HepG2 (cell line): ENCODE measurements at regions of chr15 and their contacts with region 1.

Region 1: DNA sequence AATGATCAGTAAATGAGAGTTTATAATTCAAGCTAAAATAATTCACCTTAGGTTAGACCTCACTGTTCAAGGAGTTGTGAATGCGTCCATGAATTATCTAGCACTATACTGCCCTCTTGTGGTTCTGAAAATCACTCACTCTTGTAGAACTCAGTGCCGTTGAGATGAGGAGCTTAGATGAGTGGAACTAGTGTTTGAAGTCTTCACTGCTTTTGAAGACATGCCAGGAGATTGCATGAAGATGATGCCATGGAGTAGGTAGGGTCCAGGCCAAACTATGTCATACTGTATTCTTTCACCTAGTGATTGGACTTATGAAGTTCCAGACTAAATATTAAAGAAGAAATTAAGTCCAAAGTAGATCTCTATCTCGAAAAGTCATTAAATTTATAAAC is 28.8 kb downstream of the LYSMD4 start:
- DNase-seq: peak; percentile 81
- ATAC-seq: peak; percentile 89
- H3K4me3 ChIP-seq: no peak overlapping the region
- H3K27ac ChIP-seq: no peak overlapping the region
- H3K4me1 ChIP-seq: peaks cover 15% of the 10 kb centered on the region
- H3K27me3 ChIP-seq: no peaks in the 10 kb centered on the region
- CTCF ChIP-seq: peak; percentile 86
- EP300 ChIP-seq: no peak
- POLR2A ChIP-seq: no peak
- RAD21 ChIP-seq: peak; percentile 64; the same call in 1 of the 2 replicates

Region 2: DNA sequence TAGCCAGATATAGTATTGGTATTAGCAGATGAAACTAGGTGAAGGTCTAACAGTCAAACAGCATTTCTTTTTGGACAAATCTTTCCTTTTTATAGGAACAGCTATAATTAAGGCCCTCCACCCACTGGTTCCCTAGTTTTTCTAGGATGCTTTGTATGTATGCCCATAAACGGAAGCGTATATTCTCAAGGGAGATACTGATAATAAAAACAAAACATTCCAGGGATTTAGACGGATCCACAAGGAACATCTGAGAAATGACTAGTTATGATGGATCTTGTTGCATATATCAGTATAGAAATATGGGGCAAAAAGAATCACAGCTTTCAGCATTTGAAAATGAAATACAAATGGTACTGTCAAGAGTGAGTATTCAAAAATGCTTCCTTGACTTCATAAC is 430.6 kb before region 1 on chr15:
- CTCF ChIA-PET with region 1: interaction called, 16 read pairs
- POLR2A ChIA-PET with region 1: no interaction called
- in situ Hi-C with region 1: no loop called
- intact Hi-C with region 1: loop called (anchors 1 kb)
- DNase-seq: no peak
- ATAC-seq: no peak
- H3K4me3 ChIP-seq: no peak overlapping the region
- H3K27ac ChIP-seq: no peak overlapping the region
- H3K4me1 ChIP-seq: peaks cover under 1% of the 10 kb centered on the region; the same call in 1 of the 2 replicates
- H3K27me3 ChIP-seq: no peaks in the 10 kb centered on the region
- CTCF ChIP-seq: no peak
- EP300 ChIP-seq: no peak
- POLR2A ChIP-seq: no peak
- RAD21 ChIP-seq: no peak

Region 3: DNA sequence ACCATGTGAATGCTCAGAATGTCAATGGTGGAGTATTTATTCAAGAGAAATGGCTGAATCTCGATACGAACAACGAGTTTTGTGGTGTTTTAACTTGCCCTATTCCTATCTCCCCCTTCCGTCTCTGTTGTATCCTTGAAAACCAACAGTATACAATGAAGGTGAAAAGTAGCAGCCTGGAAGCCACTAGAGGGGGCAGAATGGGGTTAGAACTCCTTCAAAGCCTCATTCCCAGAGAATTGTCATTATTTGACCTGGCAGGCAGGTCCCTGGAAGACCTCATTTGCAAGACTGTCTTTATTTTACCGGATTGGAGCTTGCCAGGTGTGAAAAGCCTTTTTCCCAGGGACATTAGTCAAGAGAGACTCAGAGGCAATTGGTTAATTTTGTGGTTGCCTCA is 313.8 kb before region 1 on chr15:
- CTCF ChIA-PET with region 1: no interaction called
- POLR2A ChIA-PET with region 1: no interaction called
- in situ Hi-C with region 1: no loop called
- intact Hi-C with region 1: loop called (anchors 5 kb)
- DNase-seq: peak; percentile 27
- ATAC-seq: peak; percentile 72
- H3K4me3 ChIP-seq: no peak overlapping the region
- H3K27ac ChIP-seq: no peak overlapping the region
- H3K4me1 ChIP-seq: peaks cover 15% of the 10 kb centered on the region
- H3K27me3 ChIP-seq: no peaks in the 10 kb centered on the region
- CTCF ChIP-seq: peak; percentile 45
- EP300 ChIP-seq: no peak
- POLR2A ChIP-seq: no peak
- RAD21 ChIP-seq: no peak

Region 4: DNA sequence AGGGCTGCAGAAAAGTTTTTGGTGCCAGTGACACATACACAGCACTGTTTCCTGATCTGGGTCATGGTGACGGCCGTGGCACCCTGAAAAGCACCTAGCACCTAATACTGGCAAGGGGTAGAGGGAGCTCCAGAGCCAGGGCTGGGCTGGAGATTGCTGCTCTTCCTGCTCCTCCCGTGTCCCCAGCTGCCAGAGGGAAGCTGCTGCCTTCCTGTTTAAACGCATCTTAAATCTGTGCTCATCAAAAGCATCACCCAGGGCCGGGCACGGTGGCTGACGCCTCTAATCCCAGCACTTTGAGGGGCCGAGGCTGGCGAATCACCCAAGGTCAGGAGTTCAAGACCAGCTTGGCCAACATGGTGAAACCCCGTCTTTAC is 295.4 kb before region 1 on chr15:
- CTCF ChIA-PET with region 1: interaction called, 3 read pairs
- POLR2A ChIA-PET with region 1: interaction called, 3 read pairs
- in situ Hi-C with region 1: loop called (anchors 25 kb)
- intact Hi-C with region 1: loop called (anchors 1 kb)
- DNase-seq: peak; percentile 66
- ATAC-seq: peak; percentile 94
- H3K4me3 ChIP-seq: peak overlapping the region in 1 of 3 experiments; percentile 40; a peak in 1 of 6 replicates
- H3K27ac ChIP-seq: no peak overlapping the region
- H3K4me1 ChIP-seq: peaks cover 40% of the 10 kb centered on the region
- H3K27me3 ChIP-seq: no peaks in the 10 kb centered on the region; a peak in 1 of 5 replicates
- CTCF ChIP-seq: peak; percentile 91
- EP300 ChIP-seq: no peak
- POLR2A ChIP-seq: no peak
- RAD21 ChIP-seq: peak; percentile 85

Region 5: GRCh38 chr15:99454941-99455788 is 249.3 kb before region 1 on chr15:
- CTCF ChIA-PET with region 1: no interaction called
- POLR2A ChIA-PET with region 1: no interaction called
- in situ Hi-C with region 1: no loop called
- intact Hi-C with region 1: loop called (anchors 5 kb)
- DNase-seq: peak; percentile 49
- ATAC-seq: peak; percentile 87
- H3K4me3 ChIP-seq: peak overlapping the region; percentile 48 to 75 (median 71)
- H3K27ac ChIP-seq: no peak overlapping the region
- H3K4me1 ChIP-seq: peaks cover 45% of the 10 kb centered on the region
- H3K27me3 ChIP-seq: peaks cover 3 to 40% of the 10 kb centered on the region in 2 experiments; a peak in 4 of 5 replicates
- CTCF ChIP-seq: no peak
- EP300 ChIP-seq: no peak
- POLR2A ChIP-seq: no peak
- RAD21 ChIP-seq: no peak

Region 6: GRCh38 chr15:99565299-99566156 is 138.9 kb before region 1 on chr15 and contains the start of gene MEF2A:
- CTCF ChIA-PET with region 1: no interaction called
- POLR2A ChIA-PET with region 1: interaction called, 13 read pairs
- in situ Hi-C with region 1: no loop called
- intact Hi-C with region 1: loop called (anchors 1 kb)
- DNase-seq: peak; percentile 82
- ATAC-seq: peak; percentile 81
- H3K4me3 ChIP-seq: peak within 1 kb of the TSS; percentile 86 to 97 (median 94)
- H3K27ac ChIP-seq: peak within 1 kb of the TSS; percentile 78
- H3K4me1 ChIP-seq: peaks cover 48% of the 10 kb centered on the region
- H3K27me3 ChIP-seq: peaks cover 0 to 3% of the 10 kb centered on the region in 2 experiments; a peak in 2 of 5 replicates
- CTCF ChIP-seq: no peak
- EP300 ChIP-seq: no peak
- POLR2A ChIP-seq: peak; percentile 64 to 79
- RAD21 ChIP-seq: peak; percentile 40; the same call in 1 of the 2 replicates
- total RNA-seq, gene MEF2A: 15.2 and 17.4 TPM in 2 replicates

Region 7: GRCh38 chr15:99755692-99756409 is 51.4 kb after region 1 on chr15:
- CTCF ChIA-PET with region 1: interaction called, 14 read pairs
- POLR2A ChIA-PET with region 1: no interaction called
- in situ Hi-C with region 1: no loop called
- intact Hi-C with region 1: loop called (anchors 1 kb)
- DNase-seq: peak; percentile 74
- ATAC-seq: peak; percentile 91
- H3K4me3 ChIP-seq: no peak overlapping the region
- H3K27ac ChIP-seq: no peak overlapping the region
- H3K4me1 ChIP-seq: peaks cover 26% of the 10 kb centered on the region
- H3K27me3 ChIP-seq: peaks cover 0 to 3% of the 10 kb centered on the region in 2 experiments; a peak in 1 of 5 replicates
- CTCF ChIP-seq: peak; percentile 88
- EP300 ChIP-seq: no peak
- POLR2A ChIP-seq: no peak
- RAD21 ChIP-seq: peak; percentile 67; the same call in 1 of the 2 replicates